Caco-2 (cell line): ENCODE measurements at regions of chr1 and their contacts with region 1.

Region 1: GRCh38 chr1:46747683-46748288 is 28.9 kb upstream of the EFCAB14 start:
- DNase-seq: peak; percentile 61 to 66
- H3K4me3 ChIP-seq: no peak overlapping the region
- H3K4me3 Mint-ChIP-seq: no peak overlapping the region
- H3K27ac Mint-ChIP-seq: no peak overlapping the region
- H3K4me1 ChIP-seq: no peaks in the 10 kb centered on the region
- H3K4me1 Mint-ChIP-seq: peaks cover 6% of the 10 kb centered on the region
- H3K27me3 ChIP-seq: no peaks in the 10 kb centered on the region
- H3K27me3 Mint-ChIP-seq: peaks cover 6% of the 10 kb centered on the region
- CTCF ChIP-seq: peak; percentile 44 to 80

Region 2: DNA sequence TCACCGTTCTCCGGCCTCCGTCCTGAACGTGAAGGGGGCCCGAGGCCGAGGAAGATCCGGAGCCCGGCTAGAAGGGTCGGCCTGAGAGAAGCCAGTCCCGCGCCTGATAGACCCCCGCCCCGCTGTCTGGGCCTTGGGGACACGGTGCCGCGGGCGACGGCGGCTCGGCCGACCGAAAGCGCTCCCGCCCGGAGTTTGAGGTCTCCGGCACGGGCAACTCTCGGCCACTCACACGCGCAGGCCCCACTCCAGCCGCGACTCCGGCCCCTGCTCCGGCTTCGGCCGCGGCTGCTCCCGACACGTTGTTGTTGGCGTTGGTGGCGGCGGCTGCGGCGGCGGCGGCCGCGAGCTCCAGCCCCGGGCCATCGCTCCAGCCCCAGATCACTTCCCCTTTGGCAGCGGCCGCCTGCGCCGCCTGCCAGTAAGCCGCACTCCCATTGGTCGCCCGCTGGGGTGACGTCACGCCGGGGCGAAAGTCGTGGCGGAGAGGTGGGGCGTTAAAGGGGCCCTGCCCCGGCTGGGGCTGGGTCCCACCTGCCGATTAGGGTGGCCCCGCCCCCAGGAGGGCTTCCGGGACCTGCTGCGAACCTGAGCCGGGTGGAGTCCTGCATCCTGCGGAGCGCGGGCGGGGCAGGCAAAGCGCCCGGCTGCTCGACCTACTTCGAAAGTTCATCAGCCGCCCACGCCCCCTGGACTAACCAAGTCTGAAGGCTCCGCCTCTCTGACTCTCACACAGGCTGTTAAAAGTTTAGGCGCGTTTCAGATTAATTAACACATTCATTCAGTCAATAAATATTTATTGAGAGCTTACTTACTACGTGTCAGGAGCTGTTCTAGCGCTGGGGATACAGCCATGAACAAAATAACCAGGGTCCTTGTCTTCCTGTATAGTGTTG is 28.8 kb before region 1 on chr1 and contains the start of gene EFCAB14:
- CTCF ChIA-PET with region 1: no interaction called
- POLR2A ChIA-PET with region 1: no interaction called
- intact Hi-C with region 1: no loop called
- DNase-seq: peak; percentile 97 to 99
- H3K4me3 ChIP-seq: peak within 1 kb of the TSS; percentile 93
- H3K4me3 Mint-ChIP-seq: peak within 1 kb of the TSS; percentile 93
- H3K27ac Mint-ChIP-seq: peak within 1 kb of the TSS; percentile 93
- H3K4me1 ChIP-seq: peaks cover 13% of the 10 kb centered on the region
- H3K4me1 Mint-ChIP-seq: peaks cover 21% of the 10 kb centered on the region
- H3K27me3 ChIP-seq: no peaks in the 10 kb centered on the region
- H3K27me3 Mint-ChIP-seq: no peaks in the 10 kb centered on the region
- CTCF ChIP-seq: no peak
- total RNA-seq, gene EFCAB14: 60.3 and 61.6 TPM in 2 replicates

Region 3: GRCh38 chr1:46862348-46862747 is 114.6 kb after region 1 on chr1:
- CTCF ChIA-PET with region 1: no interaction called
- POLR2A ChIA-PET with region 1: no interaction called
- intact Hi-C with region 1: loop called (anchors 5 kb)
- DNase-seq: no peak
- H3K4me3 ChIP-seq: no peak overlapping the region
- H3K4me3 Mint-ChIP-seq: no peak overlapping the region
- H3K27ac Mint-ChIP-seq: no peak overlapping the region
- H3K4me1 ChIP-seq: no peaks in the 10 kb centered on the region
- H3K4me1 Mint-ChIP-seq: peaks cover 6% of the 10 kb centered on the region
- H3K27me3 ChIP-seq: no peaks in the 10 kb centered on the region
- H3K27me3 Mint-ChIP-seq: no peaks in the 10 kb centered on the region
- CTCF ChIP-seq: no peak

Region 4: DNA sequence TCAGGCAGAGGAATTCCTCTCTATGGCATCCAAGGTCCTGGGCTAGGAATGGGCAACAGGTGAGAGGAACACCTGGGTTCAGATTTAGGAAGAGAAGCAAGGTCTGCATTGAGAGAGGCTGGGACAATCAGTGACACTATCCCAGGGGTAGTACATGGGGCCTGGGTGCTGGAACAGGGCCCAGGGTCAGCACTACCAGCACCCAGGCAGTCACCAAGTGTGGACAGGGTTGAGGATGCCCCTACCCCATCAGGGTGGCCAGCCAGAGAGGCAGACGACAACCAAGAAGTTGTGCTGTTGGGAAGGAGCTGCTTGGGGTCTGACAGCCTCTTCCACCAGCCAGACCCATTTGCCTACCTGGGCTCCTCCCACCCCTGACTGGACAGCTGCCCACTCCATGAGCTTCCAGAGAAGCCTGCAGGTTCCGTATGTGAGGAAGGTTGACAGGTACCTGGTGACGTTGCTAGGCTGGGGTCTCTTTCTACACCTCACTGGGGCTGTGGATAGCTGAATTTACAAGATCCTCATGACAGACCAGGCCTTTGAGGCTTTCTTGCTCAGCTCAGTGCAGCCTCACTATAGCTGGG is 179.6 kb after region 1 on chr1:
- CTCF ChIA-PET with region 1: no interaction called
- POLR2A ChIA-PET with region 1: no interaction called
- intact Hi-C with region 1: no loop called
- DNase-seq: no peak
- H3K4me3 ChIP-seq: no peak overlapping the region
- H3K4me3 Mint-ChIP-seq: no peak overlapping the region
- H3K27ac Mint-ChIP-seq: no peak overlapping the region
- H3K4me1 ChIP-seq: no peaks in the 10 kb centered on the region
- H3K4me1 Mint-ChIP-seq: peaks cover 6% of the 10 kb centered on the region
- H3K27me3 ChIP-seq: no peaks in the 10 kb centered on the region
- H3K27me3 Mint-ChIP-seq: peaks cover 5% of the 10 kb centered on the region
- CTCF ChIP-seq: no peak

Region 5: DNA sequence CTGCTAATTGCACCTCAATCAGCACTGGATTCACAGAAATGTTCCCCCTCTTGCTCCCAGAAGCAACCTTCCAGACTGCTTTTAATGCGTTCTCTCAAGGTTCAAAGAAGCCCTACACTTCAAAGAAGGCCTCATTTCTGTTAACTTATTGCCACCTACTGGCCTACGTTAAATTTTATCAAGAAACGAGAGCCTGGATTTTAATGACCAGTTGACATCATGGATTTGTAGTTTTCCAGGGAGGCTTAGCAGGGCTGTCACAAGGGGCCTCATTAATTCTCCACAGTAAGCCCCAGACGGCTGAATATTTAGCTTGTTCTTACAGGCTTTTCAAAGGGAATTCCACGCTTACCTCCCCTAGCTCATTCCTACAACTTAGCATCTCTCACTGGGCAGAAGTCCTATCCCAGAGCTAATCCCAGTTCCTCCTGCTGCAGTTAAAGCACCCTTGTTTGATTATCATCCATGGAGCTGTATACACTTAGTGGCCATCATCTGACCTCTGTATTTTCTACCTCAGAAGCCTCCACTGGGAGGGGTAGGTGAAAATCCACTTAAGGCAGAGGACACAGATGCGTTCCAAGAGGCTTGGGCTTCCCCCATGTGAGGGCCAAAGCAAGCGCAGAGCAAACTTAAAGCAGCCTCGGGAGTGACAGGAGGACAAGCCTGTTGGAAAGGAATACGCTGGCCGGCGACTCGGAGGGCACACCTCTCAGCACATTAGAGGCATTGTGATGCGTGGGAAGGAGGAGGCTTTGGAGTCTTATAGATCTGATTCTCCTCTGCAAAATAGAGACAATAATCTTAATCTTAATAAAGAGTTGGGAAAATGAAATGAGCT is 243.5 kb after region 1 on chr1:
- CTCF ChIA-PET with region 1: no interaction called
- POLR2A ChIA-PET with region 1: no interaction called
- intact Hi-C with region 1: loop called (anchors 1 kb)
- DNase-seq: peak in 1 of 2 experiments; percentile 12
- H3K4me3 ChIP-seq: no peak overlapping the region
- H3K4me3 Mint-ChIP-seq: no peak overlapping the region
- H3K27ac Mint-ChIP-seq: no peak overlapping the region
- H3K4me1 ChIP-seq: no peaks in the 10 kb centered on the region
- H3K4me1 Mint-ChIP-seq: no peaks in the 10 kb centered on the region
- H3K27me3 ChIP-seq: no peaks in the 10 kb centered on the region
- H3K27me3 Mint-ChIP-seq: peaks cover 7% of the 10 kb centered on the region
- CTCF ChIP-seq: peak; percentile 20 to 28